ENCODE measurements at regions of chr19 and their contacts with region 1.

Region 1: GRCh38 chr19:51108066-51108804 is at the start of gene CTU1:
- DNase-seq: peak; percentile 93 to 99 (median 98)
- ATAC-seq: peak; percentile 99
- H3K4me3 ChIP-seq: peak within 1 kb of the TSS; percentile 92
- H3K4me3 Mint-ChIP-seq: peak within 1 kb of the TSS; percentile 90 to 100 (median 98)
- H3K27ac ChIP-seq: peak within 1 kb of the TSS; percentile 77
- H3K27ac Mint-ChIP-seq: peak within 1 kb of the TSS; percentile 92 to 99 (median 97)
- H3K4me1 ChIP-seq: peaks cover 13% of the 10 kb centered on the region in 2 donors
- H3K4me1 Mint-ChIP-seq: peaks cover 28 to 48% (median 42%) of the 10 kb centered on the region in 7 donors
- H3K27me3 ChIP-seq: no peaks in the 10 kb centered on the region
- H3K27me3 Mint-ChIP-seq: no peaks in the 10 kb centered on the region
- total RNA-seq, gene CTU1: 3.3 to 11.8 (median 10.5) TPM

Region 2: GRCh38 chr19:50357178-50358100 is 750.8 kb before region 1 on chr19:
- CTCF ChIA-PET with region 1: no interaction called
- POLR2A ChIA-PET with region 1: no interaction called
- intact Hi-C with region 1: loop called in 1 of 2 experiments (anchors 1 kb)
- DNase-seq: peak; percentile 71 to 91 (median 85)
- ATAC-seq: peak; percentile 89
- H3K4me3 ChIP-seq: peak overlapping the region; percentile 78
- H3K4me3 Mint-ChIP-seq: peak overlapping the region; percentile 88 to 95 (median 92)
- H3K27ac ChIP-seq: peak overlapping the region; percentile 90
- H3K27ac Mint-ChIP-seq: peak overlapping the region; percentile 83 to 99 (median 96)
- H3K4me1 ChIP-seq: peaks cover 0 to 16% of the 10 kb centered on the region in 2 donors
- H3K4me1 Mint-ChIP-seq: peaks cover 15 to 48% (median 42%) of the 10 kb centered on the region in 7 donors
- H3K27me3 ChIP-seq: no peaks in the 10 kb centered on the region
- H3K27me3 Mint-ChIP-seq: no peaks in the 10 kb centered on the region

Region 3: GRCh38 chr19:51059715-51060114 is 48.5 kb before region 1 on chr19:
- CTCF ChIA-PET with region 1: no interaction called
- POLR2A ChIA-PET with region 1: no interaction called
- intact Hi-C with region 1: no loop called
- DNase-seq: no peak
- ATAC-seq: no peak
- H3K4me3 ChIP-seq: no peak overlapping the region
- H3K4me3 Mint-ChIP-seq: no peak overlapping the region
- H3K27ac ChIP-seq: no peak overlapping the region
- H3K27ac Mint-ChIP-seq: no peak overlapping the region
- H3K4me1 ChIP-seq: no peaks in the 10 kb centered on the region
- H3K4me1 Mint-ChIP-seq: peaks cover 0 to 1% (median 0%) of the 10 kb centered on the region in 7 donors
- H3K27me3 ChIP-seq: peaks cover 0 to 12% of the 10 kb centered on the region in 2 donors
- H3K27me3 Mint-ChIP-seq: peaks cover 19 to 63% (median 51%) of the 10 kb centered on the region in 5 donors

Region 4: DNA sequence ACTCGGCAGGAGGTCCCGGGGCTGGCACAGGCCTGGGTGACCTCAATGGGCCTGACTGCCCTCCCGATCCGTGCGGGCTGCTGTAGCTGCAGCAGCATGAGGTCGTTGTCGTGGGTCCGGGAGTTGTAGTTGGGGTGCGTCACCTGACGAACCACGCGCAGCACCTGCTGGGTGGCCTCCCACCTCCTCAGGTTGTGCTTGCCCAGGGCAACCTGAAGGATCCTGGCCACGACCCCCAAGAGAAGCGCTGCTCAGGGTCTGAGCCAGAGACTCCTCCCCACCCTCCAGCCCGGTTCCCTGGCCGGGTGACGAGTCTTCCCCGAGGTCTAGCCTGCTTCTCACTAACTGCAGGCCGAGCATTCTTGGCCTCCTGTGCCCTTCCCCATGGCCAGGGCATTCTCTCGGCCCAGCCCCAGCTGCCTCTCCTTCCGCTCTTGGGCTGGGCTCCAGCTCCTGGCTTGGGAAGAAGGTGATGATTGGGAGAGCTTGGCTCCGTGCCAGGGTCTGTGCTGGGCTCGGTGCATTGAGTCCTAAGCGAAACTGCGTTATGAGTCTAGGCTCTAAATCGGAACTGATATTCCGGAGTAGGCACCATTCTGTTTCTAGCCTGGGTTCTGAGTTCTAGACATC is 28.6 kb before region 1 on chr19:
- CTCF ChIA-PET with region 1: no interaction called
- POLR2A ChIA-PET with region 1: no interaction called
- intact Hi-C with region 1: no loop called
- DNase-seq: no peak
- ATAC-seq: no peak
- H3K4me3 ChIP-seq: no peak overlapping the region
- H3K4me3 Mint-ChIP-seq: no peak overlapping the region
- H3K27ac ChIP-seq: no peak overlapping the region
- H3K27ac Mint-ChIP-seq: no peak overlapping the region
- H3K4me1 ChIP-seq: no peaks in the 10 kb centered on the region
- H3K4me1 Mint-ChIP-seq: peaks cover 0 to 14% (median 0%) of the 10 kb centered on the region in 7 donors
- H3K27me3 ChIP-seq: no peaks in the 10 kb centered on the region
- H3K27me3 Mint-ChIP-seq: peaks cover 0 to 24% (median 12%) of the 10 kb centered on the region in 5 donors

Region 5: GRCh38 chr19:51123381-51123800 is 15.2 kb after region 1 on chr19:
- CTCF ChIA-PET with region 1: interaction called, 3 read pairs
- POLR2A ChIA-PET with region 1: interaction called, 9 read pairs
- intact Hi-C with region 1: loop called in 1 of 2 experiments (anchors 1 kb)
- DNase-seq: peak in 8 of 9 donors; percentile 35 to 80 (median 73)
- ATAC-seq: peak; percentile 77
- H3K4me3 ChIP-seq: peak overlapping the region; percentile 60
- H3K4me3 Mint-ChIP-seq: peak overlapping the region; percentile 67 to 87 (median 78)
- H3K27ac ChIP-seq: peak overlapping the region; percentile 66
- H3K27ac Mint-ChIP-seq: peak overlapping the region; percentile 82 to 97 (median 89)
- H3K4me1 ChIP-seq: peaks cover 45 to 85% of the 10 kb centered on the region in 2 donors
- H3K4me1 Mint-ChIP-seq: peaks cover 50 to 92% (median 83%) of the 10 kb centered on the region in 7 donors
- H3K27me3 ChIP-seq: no peaks in the 10 kb centered on the region
- H3K27me3 Mint-ChIP-seq: peaks cover 0 to 7% (median 0%) of the 10 kb centered on the region in 5 donors

Region 6: GRCh38 chr19:51168564-51169282 is 60.5 kb after region 1 on chr19:
- CTCF ChIA-PET with region 1: no interaction called
- POLR2A ChIA-PET with region 1: no interaction called
- intact Hi-C with region 1: loop called in 1 of 2 experiments (anchors 1 kb)
- DNase-seq: no peak
- ATAC-seq: no peak
- H3K4me3 ChIP-seq: no peak overlapping the region
- H3K4me3 Mint-ChIP-seq: peak overlapping the region in 3 of 10 donors; percentile 12 to 77 (median 43)
- H3K27ac ChIP-seq: no peak overlapping the region
- H3K27ac Mint-ChIP-seq: peak overlapping the region in 2 of 9 donors; percentile 57 to 86
- H3K4me1 ChIP-seq: peaks cover 15 to 17% of the 10 kb centered on the region in 2 donors
- H3K4me1 Mint-ChIP-seq: peaks cover 10 to 41% (median 28%) of the 10 kb centered on the region in 7 donors
- H3K27me3 ChIP-seq: no peaks in the 10 kb centered on the region
- H3K27me3 Mint-ChIP-seq: peaks cover 0 to 27% (median 7%) of the 10 kb centered on the region in 5 donors

Region 7: GRCh38 chr19:51441410-51442390 is 333.5 kb after region 1 on chr19:
- CTCF ChIA-PET with region 1: no interaction called
- POLR2A ChIA-PET with region 1: no interaction called
- intact Hi-C with region 1: loop called in 1 of 2 experiments (anchors 2 kb)
- DNase-seq: peak; percentile 27 to 87 (median 68)
- ATAC-seq: peak; percentile 91
- H3K4me3 ChIP-seq: peak overlapping the region; percentile 31
- H3K4me3 Mint-ChIP-seq: peak overlapping the region; percentile 74 to 92 (median 83)
- H3K27ac ChIP-seq: peak overlapping the region; percentile 53
- H3K27ac Mint-ChIP-seq: peak overlapping the region; percentile 49 to 88 (median 77)
- H3K4me1 ChIP-seq: peaks cover 22 to 24% of the 10 kb centered on the region in 2 donors
- H3K4me1 Mint-ChIP-seq: peaks cover 22 to 43% (median 34%) of the 10 kb centered on the region in 7 donors
- H3K27me3 ChIP-seq: peaks cover 0 to 4% of the 10 kb centered on the region in 2 donors
- H3K27me3 Mint-ChIP-seq: peaks cover 0 to 59% (median 5%) of the 10 kb centered on the region in 5 donors